ENCODE measurements at regions of chr4 and their contacts with region 1.

Region 1: GRCh38 chr4:152535903-152536544 is at the start of gene FBXW7:
- DNase-seq: peak; percentile 100
- H3K4me3 Mint-ChIP-seq: peak within 1 kb of the TSS; percentile 87
- H3K27ac Mint-ChIP-seq: peak within 1 kb of the TSS; percentile 97
- H3K4me1 Mint-ChIP-seq: peaks cover 56% of the 10 kb centered on the region
- H3K27me3 Mint-ChIP-seq: no peaks in the 10 kb centered on the region
- total RNA-seq, gene FBXW7: 26.7 to 29.2 TPM

Region 2: DNA sequence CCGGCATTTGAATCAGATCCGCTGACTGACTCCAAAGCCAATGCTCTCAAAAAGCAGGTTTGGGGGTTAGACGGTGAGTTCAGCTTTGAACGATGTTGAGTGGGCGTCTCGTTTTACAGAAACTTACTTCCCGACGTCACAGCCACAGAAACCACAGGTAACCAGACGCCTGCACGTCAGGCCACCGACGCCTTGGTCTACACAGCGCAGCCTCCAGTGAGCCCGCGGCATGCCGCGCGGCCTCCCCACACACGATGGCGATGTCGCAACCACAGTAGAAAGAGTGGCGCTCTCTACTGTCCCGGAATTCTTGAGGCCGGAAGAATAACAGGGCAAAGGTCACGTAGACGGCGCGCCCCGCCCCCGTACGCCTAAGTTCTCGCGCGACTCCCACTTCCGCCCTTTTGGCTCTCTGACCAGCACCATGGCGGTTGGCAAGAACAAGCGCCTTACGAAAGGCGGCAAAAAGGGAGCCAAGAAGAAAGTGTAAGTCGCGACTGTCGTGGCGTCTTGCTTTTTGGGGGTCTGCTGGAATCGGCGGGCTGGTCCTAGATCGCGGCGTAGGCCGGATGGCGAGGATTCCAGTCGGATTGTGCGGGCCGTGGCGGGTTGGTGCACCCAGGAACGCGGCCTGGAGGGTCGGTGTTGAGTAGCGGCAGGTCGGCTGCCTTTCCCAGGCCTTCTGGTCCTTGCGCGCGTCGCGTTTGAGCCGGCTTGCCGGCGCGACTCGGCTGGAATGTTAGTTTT is 1436.6 kb before region 1 on chr4 and contains the start of gene RPS3A:
- CTCF ChIA-PET with region 1: no interaction called
- intact Hi-C with region 1: loop called (anchors 1 kb)
- DNase-seq: peak; percentile 97
- H3K4me3 Mint-ChIP-seq: peak within 1 kb of the TSS; percentile 96
- H3K27ac Mint-ChIP-seq: peak within 1 kb of the TSS; percentile 100
- H3K4me1 Mint-ChIP-seq: peaks cover 37% of the 10 kb centered on the region
- H3K27me3 Mint-ChIP-seq: peaks cover 4% of the 10 kb centered on the region
- total RNA-seq, gene RPS3A: 3,793 to 3,917 TPM

Region 3: GRCh38 chr4:151887031-151887815 is 648.8 kb before region 1 on chr4:
- CTCF ChIA-PET with region 1: no interaction called
- intact Hi-C with region 1: loop called (anchors 10 kb)
- DNase-seq: peak; percentile 14
- H3K4me3 Mint-ChIP-seq: no peak overlapping the region
- H3K27ac Mint-ChIP-seq: peak overlapping the region; percentile 28
- H3K4me1 Mint-ChIP-seq: peaks cover 21% of the 10 kb centered on the region
- H3K27me3 Mint-ChIP-seq: no peaks in the 10 kb centered on the region

Region 4: GRCh38 chr4:152464030-152464823 is 71.8 kb before region 1 on chr4:
- CTCF ChIA-PET with region 1: interaction called, 3 read pairs
- intact Hi-C with region 1: loop called (anchors 1 kb)
- DNase-seq: no peak
- H3K4me3 Mint-ChIP-seq: peak overlapping the region; percentile 35
- H3K27ac Mint-ChIP-seq: peak overlapping the region; percentile 72
- H3K4me1 Mint-ChIP-seq: peaks cover 48% of the 10 kb centered on the region
- H3K27me3 Mint-ChIP-seq: no peaks in the 10 kb centered on the region

Region 5: GRCh38 chr4:152515678-152516077 is 20.3 kb before region 1 on chr4:
- CTCF ChIA-PET with region 1: no interaction called
- intact Hi-C with region 1: loop called (anchors 2 kb)
- DNase-seq: no peak
- H3K4me3 Mint-ChIP-seq: no peak overlapping the region
- H3K27ac Mint-ChIP-seq: no peak overlapping the region
- H3K4me1 Mint-ChIP-seq: peaks cover 38% of the 10 kb centered on the region
- H3K27me3 Mint-ChIP-seq: no peaks in the 10 kb centered on the region

Region 6: GRCh38 chr4:152585023-152585441 is 49.0 kb after region 1 on chr4:
- CTCF ChIA-PET with region 1: no interaction called
- intact Hi-C with region 1: loop called (anchors 1 kb)
- DNase-seq: no peak
- H3K4me3 Mint-ChIP-seq: peak overlapping the region; percentile 22
- H3K27ac Mint-ChIP-seq: peak overlapping the region; percentile 66
- H3K4me1 Mint-ChIP-seq: no peaks in the 10 kb centered on the region
- H3K27me3 Mint-ChIP-seq: no peaks in the 10 kb centered on the region

Region 7: GRCh38 chr4:153115322-153116290 is 579.6 kb after region 1 on chr4:
- CTCF ChIA-PET with region 1: interaction called, 4 read pairs
- intact Hi-C with region 1: loop called (anchors 1 kb)
- DNase-seq: peak; percentile 90
- H3K4me3 Mint-ChIP-seq: no peak overlapping the region
- H3K27ac Mint-ChIP-seq: no peak overlapping the region
- H3K4me1 Mint-ChIP-seq: peaks cover 8% of the 10 kb centered on the region
- H3K27me3 Mint-ChIP-seq: no peaks in the 10 kb centered on the region